Dorsolateral prefrontal cortex (tissue), 120 donors: ENCODE measurements at regions of chr13 and their contacts with region 1.

Region 1: GRCh38 chr13:100674848-100675660 is 459 bp upstream of the TMTC4 start:
- DNase-seq: peak; percentile 100
- H3K4me3 ChIP-seq: peak overlapping the region; percentile 61 to 99 (median 81)
- H3K27ac ChIP-seq: peak overlapping the region; percentile 27 to 100 (median 93)
- H3K27me3 ChIP-seq: no peaks in the 10 kb centered on the region
- CTCF ChIP-seq: peak in 54 of 56 donors; percentile 4 to 78 (median 54)

Region 2: DNA sequence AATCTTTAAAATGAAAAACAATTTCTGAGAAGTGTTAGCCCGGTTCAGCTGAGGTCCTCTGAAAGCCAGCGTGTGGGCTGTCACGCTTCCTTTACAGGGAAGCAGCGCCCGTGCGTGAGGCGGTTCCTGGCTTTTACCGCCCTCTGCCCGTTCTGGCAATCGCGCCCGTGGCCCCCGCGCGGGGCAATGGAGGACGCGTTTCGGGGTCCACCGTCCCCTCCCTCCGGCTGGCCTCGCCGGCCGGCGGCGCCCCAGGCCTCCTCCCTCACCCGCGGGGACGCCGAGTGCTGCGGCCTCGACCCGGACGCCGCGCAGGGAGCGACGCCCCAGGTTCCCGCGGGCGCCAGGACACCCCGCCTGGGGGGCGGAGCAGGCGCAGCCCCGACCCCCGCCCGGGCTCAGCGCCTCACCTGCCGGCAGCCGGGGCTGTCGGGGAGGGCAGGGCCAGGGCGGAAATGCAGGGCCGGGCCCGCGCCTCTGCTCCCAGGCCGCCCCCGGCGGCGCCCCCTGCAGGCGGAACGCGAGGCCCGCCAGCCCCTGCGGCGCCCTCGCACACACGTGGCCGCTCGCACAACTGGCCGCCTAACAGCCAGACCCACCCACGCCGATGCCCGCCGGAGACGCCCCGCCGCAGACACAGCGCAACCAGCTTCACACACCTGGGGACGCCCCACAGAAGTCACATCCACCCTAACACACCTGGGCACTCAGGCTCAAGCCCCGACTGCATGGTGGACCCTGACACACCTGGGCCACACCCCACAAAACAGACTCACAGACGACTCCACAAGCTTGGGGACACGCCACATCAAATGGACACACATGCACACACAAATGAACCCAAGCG is 86.5 kb before region 1 on chr13 and contains the start of gene GGACT:
- intact Hi-C with region 1: loop called in 1 of 2 experiments (anchors 5 kb)
- DNase-seq: peak in 8 of 10 donors; percentile 25 to 77 (median 47)
- H3K4me3 ChIP-seq: peak within 1 kb of the TSS; percentile 37 to 81 (median 67)
- H3K27ac ChIP-seq: peak within 1 kb of the TSS in 51 of 59 donors; percentile 0 to 84 (median 66)
- H3K27me3 ChIP-seq: no peaks in the 10 kb centered on the region
- CTCF ChIP-seq: peak in 53 of 56 donors; percentile 25 to 86 (median 58)
- total RNA-seq, gene GGACT: 0.56 to 10.3 (median 2.8) TPM

Region 3: GRCh38 chr13:100619940-100620339 is 55.1 kb before region 1 on chr13:
- intact Hi-C with region 1: no loop called
- DNase-seq: no peak
- H3K4me3 ChIP-seq: no peak overlapping the region
- H3K27ac ChIP-seq: peak overlapping the region in 2 of 59 donors; percentile 7 to 28
- H3K27me3 ChIP-seq: no peaks in the 10 kb centered on the region
- CTCF ChIP-seq: no peak

Region 4: DNA sequence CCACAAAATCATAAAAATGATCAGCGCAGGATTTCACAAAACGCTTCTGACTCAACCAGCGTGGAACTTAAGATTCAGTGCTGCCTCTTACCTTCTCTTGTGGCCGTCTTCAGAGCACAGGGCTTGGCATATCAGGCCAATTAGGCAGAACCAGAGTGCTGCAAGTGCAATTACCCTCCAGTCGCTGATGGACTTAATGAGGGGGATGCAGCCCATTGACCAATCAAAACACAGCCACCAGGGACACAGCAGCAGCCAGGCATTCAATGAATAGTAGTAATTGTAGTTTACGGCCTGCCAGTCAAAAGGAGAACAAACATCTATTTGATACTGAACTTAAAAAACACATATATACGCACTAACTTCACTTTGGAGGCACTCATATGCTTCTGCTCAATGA is 38.6 kb before region 1 on chr13:
- intact Hi-C with region 1: loop called in 1 of 2 experiments (anchors 2 kb)
- DNase-seq: peak in 8 of 10 donors; percentile 64 to 88 (median 70)
- H3K4me3 ChIP-seq: peak overlapping the region in 58 of 59 donors; percentile 12 to 74 (median 50)
- H3K27ac ChIP-seq: peak overlapping the region; percentile 1 to 95 (median 87)
- H3K27me3 ChIP-seq: no peaks in the 10 kb centered on the region
- CTCF ChIP-seq: peak in 7 of 56 donors; percentile 4 to 39 (median 34)

Region 5: GRCh38 chr13:100646030-100646673 is 28.9 kb before region 1 on chr13:
- intact Hi-C with region 1: loop called (anchors 1 to 2 kb)
- DNase-seq: peak in 8 of 10 donors; percentile 69 to 83 (median 80)
- H3K4me3 ChIP-seq: no peak overlapping the region
- H3K27ac ChIP-seq: peak overlapping the region in 54 of 59 donors; percentile 7 to 100 (median 77)
- H3K27me3 ChIP-seq: no peaks in the 10 kb centered on the region
- CTCF ChIP-seq: peak; percentile 39 to 78 (median 69)

Region 6: DNA sequence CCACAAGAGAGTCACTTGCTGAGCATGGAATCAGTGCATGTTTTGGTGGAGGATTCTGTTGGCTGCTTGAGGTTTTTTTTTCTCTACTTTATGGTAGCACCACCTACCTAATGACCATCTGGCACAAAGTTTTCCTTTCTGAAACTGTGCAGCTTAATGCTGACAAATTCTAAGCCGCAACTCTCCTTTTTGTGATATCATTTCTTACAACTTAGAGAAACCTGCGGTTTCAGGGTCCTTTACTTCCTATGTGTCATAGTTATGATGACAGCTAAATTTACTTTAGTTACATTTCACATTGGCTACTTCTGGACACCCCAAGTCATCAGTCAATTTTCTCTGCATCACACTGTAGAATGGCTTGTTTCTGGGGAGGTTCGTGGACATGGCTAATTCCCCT is 114.9 kb after region 1 on chr13:
- intact Hi-C with region 1: loop called in 1 of 2 experiments (anchors 10 kb)
- DNase-seq: no peak
- H3K4me3 ChIP-seq: peak overlapping the region in 3 of 59 donors; percentile 16 to 20 (median 20)
- H3K27ac ChIP-seq: peak overlapping the region in 53 of 59 donors; percentile 1 to 83 (median 65)
- H3K27me3 ChIP-seq: peaks cover 0 to 3% (median 0%) of the 10 kb centered on the region in 45 donors
- CTCF ChIP-seq: no peak